ENCODE measurements at regions of chr5 and their contacts with region 1.

Region 1: DNA sequence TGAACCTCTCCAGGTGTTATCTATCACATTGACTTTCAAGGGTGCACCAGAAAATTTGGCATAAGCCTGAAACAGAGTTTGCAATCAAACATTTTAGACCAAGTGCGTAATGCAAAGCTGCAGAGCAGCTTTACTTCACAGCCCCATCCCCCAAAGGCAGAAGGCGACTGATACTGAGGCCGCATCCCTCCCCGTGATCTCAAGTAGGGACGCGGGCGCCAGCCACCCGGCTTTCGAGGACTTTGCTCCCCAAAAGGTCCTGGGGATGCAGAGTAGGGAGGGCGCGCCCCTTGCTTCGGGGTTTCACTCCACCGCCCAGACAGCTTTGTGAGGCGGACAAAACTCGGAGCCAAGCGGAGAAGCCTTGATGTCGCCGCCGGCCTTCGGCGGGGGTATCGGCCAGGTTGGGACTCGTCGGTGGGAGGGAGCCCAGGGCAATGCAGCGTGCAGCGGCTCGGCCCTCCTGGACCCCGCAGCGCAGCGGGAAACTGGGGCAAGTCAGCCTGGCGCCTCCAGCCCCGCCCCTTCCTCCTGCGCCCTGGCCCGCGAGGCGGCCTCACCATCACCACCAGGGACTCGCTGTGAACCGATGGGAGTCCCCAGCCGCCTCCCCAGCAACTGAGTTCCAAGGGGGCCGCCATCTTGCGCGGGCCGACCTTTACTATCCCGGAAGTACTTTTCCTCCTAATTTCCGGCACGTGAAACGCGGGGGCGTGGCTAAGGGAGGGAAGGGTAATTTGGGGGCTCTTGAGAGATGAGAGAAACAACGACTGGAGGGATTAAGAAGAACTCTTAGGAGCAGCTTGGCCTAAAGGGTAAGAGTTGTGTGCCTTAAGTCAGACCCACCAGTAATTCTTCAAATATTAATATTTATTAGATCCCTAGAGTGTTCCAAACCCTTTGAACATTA is at the start of gene MTX3:
- DNase-seq: peak; percentile 81
- H3K4me3 Mint-ChIP-seq: peak within 1 kb of the TSS; percentile 93
- H3K27ac Mint-ChIP-seq: peak within 1 kb of the TSS; percentile 99
- H3K4me1 Mint-ChIP-seq: peaks cover 54% of the 10 kb centered on the region
- H3K27me3 Mint-ChIP-seq: no peaks in the 10 kb centered on the region
- total RNA-seq, gene MTX3: 31.4 and 32.5 TPM in 2 replicates

Region 2: GRCh38 chr5:79514391-79515105 is 476.3 kb before region 1 on chr5:
- intact Hi-C with region 1: loop called (anchors 1 kb)
- DNase-seq: peak; percentile 88
- H3K4me3 Mint-ChIP-seq: peak overlapping the region; percentile 99
- H3K27ac Mint-ChIP-seq: peak overlapping the region; percentile 100
- H3K4me1 Mint-ChIP-seq: peaks cover 43% of the 10 kb centered on the region
- H3K27me3 Mint-ChIP-seq: peaks cover 26% of the 10 kb centered on the region

Region 3: GRCh38 chr5:79845448-79846197 is 145.2 kb before region 1 on chr5:
- intact Hi-C with region 1: loop called (anchors 1 kb)
- DNase-seq: peak; percentile 20
- H3K4me3 Mint-ChIP-seq: no peak overlapping the region
- H3K27ac Mint-ChIP-seq: peak overlapping the region; percentile 84
- H3K4me1 Mint-ChIP-seq: peaks cover 26% of the 10 kb centered on the region
- H3K27me3 Mint-ChIP-seq: peaks cover 4% of the 10 kb centered on the region

Region 4: GRCh38 chr5:80037366-80037765 is 46.5 kb after region 1 on chr5:
- intact Hi-C with region 1: loop called (anchors 1 kb)
- DNase-seq: no peak
- H3K4me3 Mint-ChIP-seq: no peak overlapping the region
- H3K27ac Mint-ChIP-seq: no peak overlapping the region
- H3K4me1 Mint-ChIP-seq: peaks cover 23% of the 10 kb centered on the region
- H3K27me3 Mint-ChIP-seq: peaks cover 47% of the 10 kb centered on the region

Region 5: GRCh38 chr5:80204808-80205614 is 214.2 kb after region 1 on chr5:
- intact Hi-C with region 1: no loop called
- DNase-seq: no peak
- H3K4me3 Mint-ChIP-seq: no peak overlapping the region
- H3K27ac Mint-ChIP-seq: peak overlapping the region; percentile 84
- H3K4me1 Mint-ChIP-seq: peaks cover 41% of the 10 kb centered on the region
- H3K27me3 Mint-ChIP-seq: no peaks in the 10 kb centered on the region

Region 6: GRCh38 chr5:80246001-80246758 is 255.3 kb after region 1 on chr5:
- intact Hi-C with region 1: loop called (anchors 2 kb)
- DNase-seq: no peak
- H3K4me3 Mint-ChIP-seq: peak overlapping the region; percentile 23
- H3K27ac Mint-ChIP-seq: peak overlapping the region; percentile 87
- H3K4me1 Mint-ChIP-seq: peaks cover 43% of the 10 kb centered on the region
- H3K27me3 Mint-ChIP-seq: no peaks in the 10 kb centered on the region

Region 7: GRCh38 chr5:80654391-80655230 is 663.8 kb after region 1 on chr5 and contains the starts of genes DHFR and MSH3:
- intact Hi-C with region 1: loop called (anchors 2 kb)
- DNase-seq: peak; percentile 84
- H3K4me3 Mint-ChIP-seq: peak within 1 kb of the TSS; percentile 93
- H3K27ac Mint-ChIP-seq: peak within 1 kb of the TSS; percentile 98
- H3K4me1 Mint-ChIP-seq: peaks cover 37% of the 10 kb centered on the region
- H3K27me3 Mint-ChIP-seq: no peaks in the 10 kb centered on the region
- total RNA-seq, gene DHFR: 55.9 and 60.3 TPM in 2 replicates
- total RNA-seq, gene MSH3: 20.2 and 20.7 TPM in 2 replicates

Measured in activated T-helper 1 cell treated with anti-CD3 and anti-CD28 coated beads, Interleukin-12 subunit alpha, Interleukin-12 subunit beta, Interleukin-2, Interleukin-4 antibody, amounts not matched to agents 30 ng/mL and 10 ng/mL and 1 ng/mL, durations not matched to agents 14 hours and 24 hours and 36 hours (primary cell).